Activated CD4-positive, alpha-beta T cell treated with anti-CD3 and anti-CD28 coated beads, Interleukin-2, amount 10 ng/mL, durations not matched to agents 24 days and 14 days (primary cell): ENCODE measurements at regions of chr12 and their contacts with region 1.

Region 1: DNA sequence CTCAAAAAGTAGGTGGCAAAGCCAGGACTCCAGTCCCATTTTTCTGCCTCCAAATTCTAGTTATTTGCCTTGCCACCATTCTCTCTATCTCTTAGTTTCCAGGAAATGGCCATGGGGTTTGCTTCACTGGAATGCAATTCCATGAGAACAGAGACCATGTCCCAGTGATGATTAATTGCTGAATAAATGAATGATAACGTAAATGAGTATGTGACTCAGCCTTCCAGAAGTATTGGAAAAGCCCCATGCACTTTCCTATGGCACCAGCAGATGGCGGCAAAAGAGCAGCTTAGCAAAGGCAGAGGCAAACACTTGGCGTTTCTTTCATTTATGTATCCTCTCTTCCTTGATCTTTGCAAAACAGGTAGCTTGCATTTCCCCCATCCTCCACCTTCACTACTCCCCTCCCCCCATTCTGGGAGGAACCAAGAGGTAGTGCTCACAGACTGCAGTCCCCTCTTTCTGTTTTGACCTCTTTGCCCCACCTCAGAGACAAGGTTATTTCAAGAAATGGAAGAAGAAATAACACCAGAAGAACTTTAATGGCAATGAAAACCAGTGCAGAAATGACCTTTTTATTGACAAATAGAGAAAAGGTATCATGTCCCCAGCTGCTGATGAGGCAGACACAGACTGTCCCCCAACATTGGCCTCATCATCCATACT is 21.3 kb downstream of the TBX3 start:
- DNase-seq: peak; percentile 88
- H3K4me3 Mint-ChIP-seq: no peak overlapping the region
- H3K27ac Mint-ChIP-seq: no peak overlapping the region
- H3K4me1 Mint-ChIP-seq: no peaks in the 10 kb centered on the region
- H3K27me3 Mint-ChIP-seq: peaks cover 39% of the 10 kb centered on the region

Region 2: GRCh38 chr12:113462117-113462774 is 1200.4 kb before region 1 on chr12:
- intact Hi-C with region 1: no loop called
- DNase-seq: peak; percentile 90
- H3K4me3 Mint-ChIP-seq: peak overlapping the region; percentile 48
- H3K27ac Mint-ChIP-seq: peak overlapping the region; percentile 64
- H3K4me1 Mint-ChIP-seq: peaks cover 15% of the 10 kb centered on the region
- H3K27me3 Mint-ChIP-seq: peaks cover 62% of the 10 kb centered on the region

Region 3: DNA sequence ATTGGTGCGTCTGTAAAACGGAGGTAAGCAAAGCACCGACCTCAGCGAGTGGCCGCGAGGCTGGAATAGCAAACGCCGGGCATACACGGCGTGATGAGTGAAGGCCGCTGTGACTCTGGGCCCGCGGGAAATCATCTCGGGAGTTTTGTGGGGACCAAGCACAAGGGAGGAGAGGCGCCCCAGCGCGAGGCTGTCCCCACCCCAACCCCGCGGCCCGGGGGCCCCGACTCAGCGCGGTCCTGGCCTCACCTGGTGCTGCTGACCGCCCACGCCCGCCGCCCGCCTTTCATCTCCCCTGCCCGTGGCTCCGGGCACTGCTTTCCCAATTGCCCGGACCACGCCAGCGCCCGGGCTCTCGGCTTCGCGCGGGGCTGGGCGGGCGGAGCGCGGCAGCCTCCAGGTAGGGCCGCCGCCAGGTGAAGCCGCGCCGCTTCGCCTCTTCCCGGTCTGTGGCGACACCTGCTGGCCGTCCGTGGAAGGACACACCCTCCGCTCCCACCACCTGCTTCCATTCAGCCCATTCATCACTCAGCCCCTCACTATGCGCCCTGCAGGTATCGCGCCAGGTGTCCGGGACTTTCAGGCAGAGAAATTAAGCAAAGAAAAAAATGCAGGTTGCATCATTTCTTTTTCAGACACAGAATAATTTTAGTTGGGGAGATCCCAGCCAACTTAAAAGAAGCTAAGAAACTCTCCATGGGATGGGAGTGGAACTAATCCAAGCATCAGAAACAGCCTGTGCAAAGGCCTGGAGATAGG is 1254.4 kb after region 1 on chr12:
- intact Hi-C with region 1: loop called (anchors 1 kb)
- DNase-seq: peak; percentile 92
- H3K4me3 Mint-ChIP-seq: no peak overlapping the region
- H3K27ac Mint-ChIP-seq: no peak overlapping the region
- H3K4me1 Mint-ChIP-seq: no peaks in the 10 kb centered on the region
- H3K27me3 Mint-ChIP-seq: peaks cover 21% of the 10 kb centered on the region